Mammary epithelial cell (primary cell): ENCODE measurements at regions of chr2 and their contacts with region 1.

Region 1: DNA sequence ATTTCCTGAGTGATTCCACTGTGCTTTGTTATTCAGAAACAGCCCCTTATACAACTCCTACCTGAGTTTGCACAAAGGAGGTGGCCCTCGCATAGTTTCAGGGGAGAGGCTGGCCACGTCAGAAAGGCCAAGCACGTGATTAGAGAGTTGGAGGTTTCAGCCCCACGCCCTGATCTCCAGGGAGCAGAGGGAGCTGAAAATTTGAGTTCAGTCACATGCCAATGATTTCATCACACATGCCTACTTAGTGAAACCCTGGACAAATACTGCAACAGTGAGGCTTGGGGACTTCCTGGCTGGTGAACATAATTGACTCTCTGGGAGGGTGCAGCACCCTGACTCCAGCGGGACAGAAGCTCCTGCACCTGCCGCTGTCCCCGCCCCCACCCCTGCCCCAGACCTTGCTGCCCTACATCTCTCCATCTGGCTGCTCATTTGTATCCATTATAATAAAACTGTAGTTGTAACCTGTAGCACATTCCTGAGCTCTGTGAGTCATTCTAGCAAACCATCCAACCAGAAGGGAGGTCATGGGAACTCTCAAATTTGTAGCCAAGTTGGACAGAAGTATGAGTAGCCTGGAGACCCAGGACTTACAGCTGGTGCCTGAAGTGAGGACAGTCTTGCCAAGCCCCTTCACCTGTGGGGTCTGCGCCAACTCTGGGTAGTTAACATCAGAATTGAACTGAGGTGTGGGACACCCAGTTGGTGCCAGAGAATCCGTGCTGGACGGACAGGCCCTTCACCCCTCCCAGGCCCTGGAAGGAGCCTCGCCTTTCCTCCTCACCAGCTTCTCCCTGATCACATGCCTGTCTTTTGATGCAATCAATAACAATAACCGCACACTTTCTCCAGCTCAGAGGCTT is 224.3 kb downstream of the ANAPC1 start:
- DNase-seq: peak; percentile 99
- H3K4me3 ChIP-seq: no peak overlapping the region
- H3K27ac ChIP-seq: peak overlapping the region; percentile 96
- H3K4me1 ChIP-seq: peaks cover 37% of the 10 kb centered on the region
- H3K27me3 ChIP-seq: no peaks in the 10 kb centered on the region
- CTCF ChIP-seq: no peak

Region 2: DNA sequence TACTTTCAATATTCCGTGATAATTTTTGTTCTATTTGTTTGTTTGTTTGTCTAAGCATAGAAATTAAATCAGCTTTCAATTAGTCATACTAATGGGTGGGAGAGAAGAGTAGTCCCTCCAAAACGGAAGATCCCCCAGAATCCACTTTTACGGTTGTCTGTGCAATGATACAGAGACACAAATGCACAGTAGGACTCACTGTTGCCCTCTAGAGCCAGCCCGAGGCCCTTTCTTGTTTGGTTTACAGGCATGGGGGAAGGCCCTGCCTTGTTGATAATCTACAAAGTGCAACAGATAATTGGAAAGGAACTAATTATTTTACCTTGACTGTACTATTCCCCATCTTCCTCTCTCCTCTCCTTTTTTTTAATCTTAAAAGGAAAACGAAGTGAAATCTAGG is 806.1 kb before region 1 on chr2:
- CTCF ChIA-PET with region 1: interaction called, 21 read pairs
- dilution Hi-C with region 1: no loop called
- in situ Hi-C with region 1: no loop called
- intact Hi-C with region 1: no loop called
- DNase-seq: no peak
- H3K4me3 ChIP-seq: no peak overlapping the region
- H3K27ac ChIP-seq: no peak overlapping the region
- H3K4me1 ChIP-seq: no peaks in the 10 kb centered on the region
- H3K27me3 ChIP-seq: no peaks in the 10 kb centered on the region
- CTCF ChIP-seq: peak; percentile 48 to 69

Region 3: DNA sequence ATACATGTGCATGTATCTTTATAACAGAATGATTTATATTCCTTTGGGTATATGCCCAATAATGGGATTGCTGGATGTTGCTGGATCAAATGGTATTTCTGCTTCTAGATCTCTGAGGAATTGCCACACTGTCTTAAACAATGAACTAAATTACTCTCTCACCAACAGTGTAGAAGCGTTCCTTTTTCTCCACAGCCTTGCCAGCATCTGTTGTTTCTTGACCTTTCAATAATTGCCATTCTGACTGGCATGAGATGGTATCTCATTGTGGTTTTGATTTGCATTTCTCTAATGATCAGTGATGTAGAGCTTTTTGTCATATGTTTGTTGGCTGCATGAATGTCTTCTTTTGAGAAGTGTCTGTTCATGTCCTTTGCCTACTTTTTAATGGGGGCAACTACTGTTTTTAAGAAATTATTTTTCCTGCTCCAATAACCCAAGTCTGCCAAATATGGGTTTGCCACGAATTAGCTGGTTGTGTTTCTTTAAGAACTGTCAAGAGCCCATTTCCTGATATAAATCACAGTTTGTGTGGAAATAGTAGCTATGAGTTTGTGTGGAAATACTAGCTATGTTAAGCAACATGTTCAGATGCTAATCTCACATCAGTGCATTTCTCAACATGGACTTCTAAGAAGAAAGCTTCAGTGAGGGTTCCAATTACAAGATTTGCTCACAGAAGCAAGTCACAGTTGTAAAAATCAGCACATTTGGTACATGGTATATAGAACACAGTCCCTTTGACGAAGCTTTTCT is 35.1 kb before region 1 on chr2:
- CTCF ChIA-PET with region 1: interaction called, 10 read pairs
- dilution Hi-C with region 1: no loop called
- in situ Hi-C with region 1: no loop called
- intact Hi-C with region 1: no loop called
- DNase-seq: peak; percentile 80
- H3K4me3 ChIP-seq: no peak overlapping the region
- H3K27ac ChIP-seq: no peak overlapping the region
- H3K4me1 ChIP-seq: peaks cover 19% of the 10 kb centered on the region
- H3K27me3 ChIP-seq: no peaks in the 10 kb centered on the region
- CTCF ChIP-seq: no peak

Region 4: DNA sequence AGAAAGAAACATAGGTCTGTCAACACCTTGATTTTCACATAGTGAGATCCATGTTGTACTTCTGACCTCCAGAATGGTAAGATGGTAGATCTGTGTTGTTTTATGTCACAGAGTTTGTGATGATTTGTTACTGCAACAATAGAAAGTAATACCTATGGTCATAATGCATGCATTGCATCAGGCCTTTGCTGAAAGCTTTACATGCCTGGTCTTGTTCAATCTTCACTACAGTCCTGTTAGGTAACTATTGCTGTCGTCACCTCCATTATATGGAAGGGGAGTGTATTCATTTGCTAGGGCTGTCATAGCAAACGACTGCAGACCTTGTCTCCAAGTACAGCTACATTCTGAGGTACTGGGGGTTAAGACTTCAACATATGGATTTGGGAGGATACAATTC is 19.2 kb before region 1 on chr2:
- CTCF ChIA-PET with region 1: no interaction called
- dilution Hi-C with region 1: no loop called
- in situ Hi-C with region 1: no loop called
- intact Hi-C with region 1: loop called (anchors 2 kb)
- DNase-seq: peak; percentile 92
- H3K4me3 ChIP-seq: no peak overlapping the region
- H3K27ac ChIP-seq: peak overlapping the region; percentile 71
- H3K4me1 ChIP-seq: peaks cover 15% of the 10 kb centered on the region
- H3K27me3 ChIP-seq: no peaks in the 10 kb centered on the region
- CTCF ChIP-seq: no peak

Region 5: DNA sequence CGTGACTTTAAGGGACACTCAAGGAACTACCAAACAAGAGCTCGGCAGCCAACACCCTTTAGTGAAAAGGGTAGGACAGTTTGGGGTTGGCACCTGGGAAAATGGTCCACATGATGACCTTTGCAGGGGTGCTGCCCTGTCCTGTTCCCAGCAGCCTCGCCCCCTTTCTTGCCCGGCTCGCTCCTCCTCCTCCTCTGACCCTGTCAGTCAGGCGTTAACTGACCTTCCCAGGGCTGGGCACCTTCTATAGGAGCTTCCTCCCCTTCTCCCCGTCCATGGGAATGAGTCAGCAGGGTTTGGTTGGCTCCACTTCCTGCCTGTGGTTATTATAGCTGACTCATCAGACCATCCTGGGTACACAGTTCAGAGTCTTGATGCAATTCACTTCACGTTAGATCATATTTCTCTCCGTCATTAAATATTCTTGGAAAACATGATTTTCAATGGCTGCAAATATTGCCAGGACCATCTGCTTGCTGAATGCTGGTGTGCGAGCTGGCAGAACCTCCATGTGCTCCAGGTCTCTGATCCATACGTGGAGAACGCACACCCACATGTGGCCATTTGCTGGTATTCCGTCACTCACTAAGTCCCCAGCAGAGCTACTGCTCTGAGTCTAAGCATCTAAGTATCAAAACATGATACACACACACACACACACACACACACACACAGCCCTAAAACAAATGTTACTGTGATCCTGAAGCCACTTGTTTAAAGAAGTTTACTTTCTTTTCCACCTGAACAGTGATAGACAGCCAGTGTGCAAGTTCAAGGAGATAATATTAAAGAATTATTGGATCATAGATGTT is 39.3 kb after region 1 on chr2:
- CTCF ChIA-PET with region 1: no interaction called
- dilution Hi-C with region 1: loop called (anchors 5 kb)
- in situ Hi-C with region 1: no loop called
- intact Hi-C with region 1: no loop called
- DNase-seq: peak; percentile 99
- H3K4me3 ChIP-seq: peak overlapping the region in 1 of 3 experiments; percentile 6
- H3K27ac ChIP-seq: peak overlapping the region; percentile 73
- H3K4me1 ChIP-seq: peaks cover 50% of the 10 kb centered on the region
- H3K27me3 ChIP-seq: no peaks in the 10 kb centered on the region
- CTCF ChIP-seq: peak; percentile 45 to 54

Region 6: DNA sequence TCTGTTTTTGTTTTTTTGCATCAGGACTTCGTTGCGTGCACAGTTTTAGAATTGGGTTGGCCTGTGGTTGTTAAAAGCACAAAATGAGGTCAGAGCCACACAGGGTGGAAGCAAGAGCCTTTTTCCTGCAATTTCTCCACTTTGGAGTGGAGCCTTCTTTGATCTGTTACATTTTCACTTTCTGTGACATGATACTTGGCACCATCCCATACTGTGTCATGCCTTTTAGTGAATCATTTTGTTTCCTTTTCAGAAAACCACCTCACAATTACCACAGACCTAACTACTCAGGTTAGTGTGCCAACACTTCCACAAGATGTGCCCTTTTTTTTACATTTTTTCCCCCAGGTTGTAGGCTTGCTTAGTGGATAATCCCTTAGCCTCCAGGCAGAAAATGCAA is 271.2 kb after region 1 on chr2:
- CTCF ChIA-PET with region 1: no interaction called
- dilution Hi-C with region 1: no loop called
- in situ Hi-C with region 1: no loop called
- intact Hi-C with region 1: no loop called
- DNase-seq: peak; percentile 85
- H3K4me3 ChIP-seq: no peak overlapping the region
- H3K27ac ChIP-seq: no peak overlapping the region
- H3K4me1 ChIP-seq: peaks cover 3% of the 10 kb centered on the region
- H3K27me3 ChIP-seq: peaks cover 9% of the 10 kb centered on the region
- CTCF ChIP-seq: no peak

Region 7: GRCh38 chr2:111975053-111975552 is 315.5 kb after region 1 on chr2:
- CTCF ChIA-PET with region 1: interaction called, 10 read pairs
- dilution Hi-C with region 1: no loop called
- in situ Hi-C with region 1: no loop called
- intact Hi-C with region 1: no loop called
- DNase-seq: peak; percentile 98
- H3K4me3 ChIP-seq: no peak overlapping the region
- H3K27ac ChIP-seq: no peak overlapping the region
- H3K4me1 ChIP-seq: peaks cover 15% of the 10 kb centered on the region
- H3K27me3 ChIP-seq: peaks cover 11% of the 10 kb centered on the region
- CTCF ChIP-seq: no peak

Region 8: DNA sequence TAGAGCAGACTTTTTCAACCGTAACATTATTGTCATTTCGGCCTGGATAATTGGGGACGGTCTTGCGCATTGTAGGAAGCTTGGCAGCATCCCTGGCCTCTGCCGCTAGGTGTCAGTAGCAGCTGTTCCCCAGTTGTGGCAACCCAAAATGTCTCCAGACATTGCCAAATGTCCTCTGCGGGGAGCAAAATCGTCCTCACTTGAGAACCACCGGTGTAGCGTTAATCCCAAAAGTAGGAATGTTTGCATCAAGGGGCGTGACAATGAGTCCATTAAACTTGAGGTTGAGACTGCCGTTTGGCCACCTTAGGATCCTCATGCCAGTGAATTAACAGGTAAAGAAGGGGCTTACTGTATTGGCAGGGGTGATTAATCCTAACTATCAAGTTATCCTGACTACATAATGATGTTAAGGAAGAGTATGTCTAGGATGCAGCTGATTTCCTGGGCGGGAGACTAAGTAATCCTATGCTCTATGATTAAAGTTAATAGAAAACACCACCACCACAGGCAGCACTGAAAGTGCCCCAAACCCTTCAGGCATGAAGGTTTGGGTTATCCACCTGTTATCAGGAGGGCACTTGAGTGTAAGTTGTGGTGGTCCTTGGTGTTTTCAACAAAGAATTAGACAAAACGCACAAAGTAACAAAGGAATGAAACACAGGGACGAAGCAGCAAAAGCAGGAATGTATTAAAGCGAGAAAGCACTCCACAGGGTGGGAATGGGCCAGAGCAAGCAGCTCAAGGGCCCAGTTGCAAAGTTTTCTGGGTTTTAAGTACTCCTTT is 600.1 kb after region 1 on chr2:
- CTCF ChIA-PET with region 1: no interaction called
- dilution Hi-C with region 1: no loop called
- in situ Hi-C with region 1: no loop called
- intact Hi-C with region 1: no loop called
- DNase-seq: peak; percentile 55
- H3K4me3 ChIP-seq: no peak overlapping the region
- H3K27ac ChIP-seq: no peak overlapping the region
- H3K4me1 ChIP-seq: no peaks in the 10 kb centered on the region
- H3K27me3 ChIP-seq: peaks cover 2% of the 10 kb centered on the region
- CTCF ChIP-seq: peak; percentile 98